GM12878 (cell line): ENCODE measurements at regions of chr1 and their contacts with region 1.

Region 1: DNA sequence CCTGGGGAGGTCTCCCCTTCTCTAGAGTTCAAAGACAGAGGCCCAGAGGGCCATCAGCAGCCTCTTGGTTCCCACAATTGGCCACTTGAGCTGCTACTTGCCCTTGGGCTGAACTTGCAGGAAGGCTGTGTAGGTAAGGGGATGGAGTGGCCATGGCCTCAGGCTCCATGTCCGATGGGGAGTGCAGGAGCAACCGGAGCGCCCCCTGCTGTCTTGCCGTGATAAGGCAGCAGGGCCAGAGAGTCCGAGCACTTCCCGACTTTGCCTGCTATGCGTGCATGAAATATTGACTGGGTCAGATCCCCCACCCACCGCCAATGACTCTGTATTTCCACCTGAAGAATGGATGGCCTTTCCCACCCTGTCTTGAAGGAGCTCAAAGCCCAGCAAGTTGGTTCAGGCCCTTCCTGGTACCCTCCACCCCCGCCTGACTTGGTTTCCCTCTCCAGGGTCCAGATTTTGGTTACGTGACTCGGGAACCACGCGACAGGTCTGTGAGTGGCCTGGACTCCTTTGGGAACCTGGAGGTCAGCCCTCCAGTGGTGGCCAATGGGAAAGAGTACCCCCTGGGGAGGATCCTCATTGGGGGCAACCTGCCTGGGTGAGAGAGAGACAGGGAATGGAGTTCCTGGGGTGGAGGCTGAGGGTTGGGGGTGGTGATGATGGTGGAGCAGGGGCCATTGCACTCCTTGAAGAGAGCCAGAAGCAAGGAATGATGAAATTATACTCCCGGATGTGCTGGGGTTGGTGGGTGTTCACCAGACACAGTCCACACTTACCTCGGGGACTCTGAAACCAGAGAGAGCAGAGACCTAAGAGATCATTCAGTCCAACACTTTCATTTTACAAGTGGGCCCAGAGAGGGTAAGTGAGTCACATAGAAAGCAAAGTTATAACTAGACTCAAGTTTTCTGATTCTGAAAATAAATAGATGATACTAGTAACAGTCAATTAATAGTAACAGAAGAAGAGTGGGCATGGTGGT is 25.6 kb downstream of the PADI3 start:
- DNase-seq: peak; percentile 11
- ATAC-seq: peak; percentile 89
- H3K4me3 ChIP-seq: peak overlapping the region; percentile 32; the same call in 1 of the 2 replicates
- H3K27ac ChIP-seq: peak overlapping the region; percentile 32; the same call in 1 of the 2 replicates
- H3K4me1 ChIP-seq: peaks cover 10% of the 10 kb centered on the region
- H3K27me3 ChIP-seq: no peaks in the 10 kb centered on the region
- CTCF ChIP-seq: peak; percentile 56 to 84 (median 69)
- EP300 ChIP-seq: no peak
- POLR2A ChIP-seq: no peak
- RAD21 ChIP-seq: no peak

Region 2: DNA sequence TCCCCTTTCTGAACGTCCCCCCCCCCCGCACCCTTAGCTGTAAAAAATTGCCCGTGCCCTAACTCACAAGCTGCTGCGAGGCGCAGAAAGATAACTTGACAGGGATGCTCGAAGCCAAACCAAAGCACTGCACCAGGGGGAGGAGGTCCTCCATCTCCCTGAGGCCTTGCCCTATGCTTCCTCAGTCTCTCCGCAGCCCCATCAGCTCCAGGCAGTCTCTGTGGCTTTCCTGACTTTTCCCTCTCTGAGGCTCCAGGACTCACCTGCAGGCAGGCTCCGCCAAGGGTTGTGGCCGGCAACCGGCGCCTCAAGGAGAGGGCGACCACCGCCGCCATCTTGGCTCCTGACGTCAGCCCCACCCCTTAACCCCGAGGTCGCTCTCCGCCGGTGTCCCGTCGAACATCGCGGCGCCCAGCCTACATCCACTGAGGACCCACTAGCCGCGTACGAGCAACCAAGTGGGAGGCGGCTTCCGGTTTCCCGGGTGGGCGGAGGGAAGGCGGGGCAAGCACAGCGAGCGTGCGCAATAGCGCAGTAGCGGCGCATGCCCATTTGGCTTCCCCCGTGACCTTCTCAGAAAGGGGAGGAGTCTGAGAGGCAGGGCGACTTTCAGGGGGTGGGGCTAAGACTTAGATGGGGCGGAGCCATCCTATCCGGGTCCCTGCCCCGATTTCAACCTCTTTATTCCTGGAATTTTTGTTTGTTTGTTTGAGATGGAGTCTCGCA is 220.6 kb before region 1 on chr1 and contains the start of gene SDHB:
- CTCF ChIA-PET with region 1: interaction called, 5 read pairs
- POLR2A ChIA-PET with region 1: no interaction called
- RAD21 ChIA-PET with region 1: interaction called, 3 read pairs
- SMC1A ChIA-PET with region 1: no interaction called
- in situ Hi-C with region 1: no loop called
- intact Hi-C with region 1: loop called (anchors 10 kb)
- DNase-seq: peak; percentile 96
- ATAC-seq: peak; percentile 100
- H3K4me3 ChIP-seq: peak within 1 kb of the TSS; percentile 96
- H3K27ac ChIP-seq: peak within 1 kb of the TSS; percentile 80
- H3K4me1 ChIP-seq: no peaks in the 10 kb centered on the region; the same call in 1 of the 2 replicates
- H3K27me3 ChIP-seq: no peaks in the 10 kb centered on the region
- CTCF ChIP-seq: no peak
- EP300 ChIP-seq: no peak
- POLR2A ChIP-seq: peak; percentile 95
- RAD21 ChIP-seq: no peak
- polyA plus RNA-seq, gene SDHB: 101 to 215 TPM

Region 3: DNA sequence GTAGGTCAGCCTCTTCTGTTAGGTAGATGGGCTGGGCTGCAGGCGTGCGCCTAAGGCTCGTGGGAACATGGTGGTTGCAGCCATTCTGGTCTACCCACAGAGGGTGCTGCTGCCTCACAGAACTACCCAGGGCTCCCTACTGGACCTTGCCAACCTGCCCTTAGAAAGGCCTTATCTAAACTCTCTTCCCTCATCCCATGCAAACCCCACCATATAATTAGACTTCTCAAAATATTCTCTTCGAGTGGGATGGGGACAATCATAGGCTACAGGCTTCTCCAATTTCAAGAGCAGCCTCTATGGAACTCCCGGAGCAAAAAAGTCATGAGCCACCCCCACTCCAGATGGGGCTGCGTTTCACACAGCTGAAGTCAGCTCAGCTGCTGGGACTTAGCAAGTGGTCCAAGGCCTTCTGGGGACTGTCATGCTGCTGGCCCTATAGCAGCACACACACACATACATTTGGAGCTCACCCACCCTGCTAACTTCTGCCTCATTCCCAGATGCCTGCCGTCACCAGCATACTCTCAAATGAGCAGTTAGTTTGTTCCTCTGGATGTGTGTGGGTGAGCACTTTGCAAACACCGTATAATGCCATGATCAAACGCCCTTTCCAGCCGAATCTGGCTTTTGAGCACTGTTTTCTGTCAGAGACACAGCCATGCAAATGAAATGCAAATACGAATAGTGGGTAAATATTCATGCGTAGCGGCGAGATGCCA is 214.6 kb before region 1 on chr1:
- CTCF ChIA-PET with region 1: interaction called, 11 read pairs
- POLR2A ChIA-PET with region 1: no interaction called
- RAD21 ChIA-PET with region 1: interaction called, 3 read pairs
- SMC1A ChIA-PET with region 1: no interaction called
- in situ Hi-C with region 1: no loop called
- intact Hi-C with region 1: loop called (anchors 10 kb)
- DNase-seq: peak; percentile 30
- ATAC-seq: peak; percentile 100
- H3K4me3 ChIP-seq: no peak overlapping the region
- H3K27ac ChIP-seq: no peak overlapping the region
- H3K4me1 ChIP-seq: peaks cover 6% of the 10 kb centered on the region; the same call in 1 of the 2 replicates
- H3K27me3 ChIP-seq: no peaks in the 10 kb centered on the region
- CTCF ChIP-seq: peak; percentile 80 to 93 (median 81)
- EP300 ChIP-seq: no peak
- POLR2A ChIP-seq: no peak
- RAD21 ChIP-seq: peak; percentile 66

Region 4: DNA sequence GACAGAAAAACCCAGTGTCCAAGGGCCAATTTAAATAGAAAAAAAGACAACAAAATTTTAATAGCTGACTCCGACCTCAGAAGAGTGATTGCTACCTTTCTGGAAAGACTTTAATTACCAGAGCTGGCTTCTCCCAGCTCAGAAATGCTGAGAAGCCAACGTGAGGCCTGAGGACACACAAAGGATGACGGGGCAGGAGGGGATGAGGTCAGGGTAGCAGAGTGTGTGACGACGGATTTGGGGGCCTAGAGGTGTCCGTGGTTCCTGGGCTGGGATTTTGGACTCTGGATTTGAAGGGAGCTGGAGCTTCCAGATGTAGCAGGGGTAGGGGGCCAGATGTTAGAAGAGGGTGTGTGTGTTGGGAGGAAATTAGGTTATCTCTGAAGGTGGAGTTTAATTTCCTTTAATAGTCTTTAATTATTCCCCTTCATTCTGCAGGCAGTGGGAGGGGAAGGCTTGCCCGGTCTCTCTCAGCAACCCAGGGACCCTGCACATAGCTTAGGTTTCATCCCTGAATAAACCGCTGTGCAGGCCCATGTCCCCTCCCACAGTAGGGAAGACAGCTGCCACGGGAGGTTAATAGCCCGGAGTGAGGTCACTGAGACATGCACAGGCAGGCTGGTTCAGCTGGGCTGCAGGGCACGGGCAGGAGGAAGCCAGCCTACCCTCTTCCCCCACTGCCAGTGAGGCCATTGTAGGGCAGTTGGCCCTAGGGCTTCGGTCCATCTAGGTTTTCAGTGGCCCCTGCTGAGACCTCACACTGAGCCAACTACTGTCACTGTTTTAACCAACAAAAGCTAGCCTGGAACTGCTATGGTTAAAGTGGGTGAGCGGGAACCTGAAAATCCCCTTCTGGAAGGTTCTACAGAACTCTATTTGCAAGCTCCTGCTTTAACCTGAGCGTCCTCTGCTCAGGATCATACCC is 29.4 kb before region 1 on chr1:
- CTCF ChIA-PET with region 1: interaction called, 10 read pairs
- POLR2A ChIA-PET with region 1: no interaction called
- RAD21 ChIA-PET with region 1: no interaction called
- SMC1A ChIA-PET with region 1: interaction called, 4 read pairs
- in situ Hi-C with region 1: no loop called
- intact Hi-C with region 1: no loop called
- DNase-seq: no peak
- ATAC-seq: peak; percentile 19; the same call in 2 of the 3 replicates
- H3K4me3 ChIP-seq: no peak overlapping the region
- H3K27ac ChIP-seq: no peak overlapping the region
- H3K4me1 ChIP-seq: 0 out of 2 replicates have a peak, but pooled peaks cover 3% of the 10 kb centered on the region
- H3K27me3 ChIP-seq: peaks cover 0 to 2% of the 10 kb centered on the region in 2 experiments; a peak in 1 of 4 replicates
- CTCF ChIP-seq: no peak
- EP300 ChIP-seq: no peak
- POLR2A ChIP-seq: no peak
- RAD21 ChIP-seq: no peak

Region 5: GRCh38 chr1:17263936-17264335 is 10.5 kb before region 1 on chr1:
- CTCF ChIA-PET with region 1: interaction called, 13 read pairs
- POLR2A ChIA-PET with region 1: no interaction called
- RAD21 ChIA-PET with region 1: no interaction called
- SMC1A ChIA-PET with region 1: interaction called, 5 read pairs
- in situ Hi-C with region 1: no loop called
- intact Hi-C with region 1: no loop called
- DNase-seq: no peak
- ATAC-seq: no peak
- H3K4me3 ChIP-seq: no peak overlapping the region
- H3K27ac ChIP-seq: no peak overlapping the region
- H3K4me1 ChIP-seq: no peaks in the 10 kb centered on the region
- H3K27me3 ChIP-seq: no peaks in the 10 kb centered on the region
- CTCF ChIP-seq: no peak
- EP300 ChIP-seq: no peak
- POLR2A ChIP-seq: no peak
- RAD21 ChIP-seq: no peak

Region 6: DNA sequence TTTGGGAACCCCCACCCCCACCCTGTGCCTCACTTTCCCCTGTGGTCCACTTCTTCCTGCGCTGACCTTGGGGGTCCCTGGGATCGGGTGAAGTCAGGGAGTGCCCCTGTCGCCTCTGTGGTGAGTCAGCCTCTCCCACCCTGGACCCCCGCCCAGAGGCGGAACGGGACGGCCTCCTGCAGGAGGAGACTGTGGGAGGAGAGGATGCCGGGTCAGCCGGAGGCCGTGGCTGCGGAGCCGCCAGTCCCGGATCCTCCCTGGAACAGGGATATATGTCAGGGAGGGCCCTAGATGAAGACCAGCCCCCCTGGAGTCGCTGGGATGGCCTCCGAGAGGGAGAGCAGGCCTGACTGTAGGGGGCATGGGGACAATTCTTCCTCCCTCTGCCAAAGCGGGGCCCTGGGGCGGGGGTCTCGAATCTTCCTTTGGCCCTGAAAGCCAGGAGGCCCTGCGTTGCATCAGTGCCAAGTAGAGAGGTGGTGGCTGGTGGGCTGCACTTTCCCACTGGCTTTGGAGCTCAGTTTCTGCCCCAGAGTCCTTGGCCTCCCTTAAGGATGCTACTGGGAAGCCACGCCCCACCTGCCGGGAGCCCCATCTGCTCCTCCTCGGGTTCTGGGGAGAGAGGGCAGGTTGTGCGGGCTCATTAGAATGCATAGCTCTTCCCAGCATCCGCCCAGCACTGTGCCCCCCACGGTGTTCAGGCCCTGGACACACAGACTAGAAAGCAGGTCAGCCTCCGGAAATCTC is 265.9 kb after region 1 on chr1:
- CTCF ChIA-PET with region 1: no interaction called
- POLR2A ChIA-PET with region 1: no interaction called
- RAD21 ChIA-PET with region 1: no interaction called
- SMC1A ChIA-PET with region 1: no interaction called
- in situ Hi-C with region 1: no loop called
- intact Hi-C with region 1: no loop called
- DNase-seq: no peak
- ATAC-seq: no peak
- H3K4me3 ChIP-seq: no peak overlapping the region
- H3K27ac ChIP-seq: no peak overlapping the region
- H3K4me1 ChIP-seq: peaks cover 17% of the 10 kb centered on the region
- H3K27me3 ChIP-seq: peaks cover 4 to 5% of the 10 kb centered on the region in 2 experiments; a peak in 3 of 4 replicates
- CTCF ChIP-seq: no peak
- EP300 ChIP-seq: no peak
- POLR2A ChIP-seq: no peak
- RAD21 ChIP-seq: no peak